PC-3 (cell line): ENCODE measurements at regions of chr7 and their contacts with region 1.

Region 1: DNA sequence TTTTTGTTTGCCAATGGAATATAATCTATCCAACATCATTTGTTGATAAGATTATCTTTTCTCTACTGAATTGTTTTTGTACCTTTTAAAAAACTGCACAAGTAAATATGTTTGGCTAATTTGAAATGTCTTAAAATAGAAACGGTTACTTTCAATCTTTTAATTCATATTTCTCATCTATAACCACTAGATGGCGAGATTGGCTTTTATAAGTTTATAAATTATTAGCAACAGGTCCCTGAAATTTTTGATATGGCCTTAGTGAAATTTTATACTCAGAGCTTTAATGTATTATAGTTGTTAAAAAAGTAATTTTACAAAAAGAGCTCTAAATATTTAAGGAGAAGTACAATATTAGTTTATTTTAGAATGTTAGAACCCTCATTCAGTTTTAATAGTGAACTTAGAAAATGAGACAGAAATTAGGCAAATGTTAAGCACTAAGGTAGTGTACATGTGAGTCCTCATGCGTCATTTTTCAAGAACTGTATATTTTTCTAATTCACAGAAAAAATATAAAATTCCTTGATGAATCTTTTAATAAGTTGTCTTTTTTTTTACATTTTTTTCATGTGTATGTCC is 592.5 kb downstream of the ARL4A start:
- DNase-seq: peak; percentile 63
- ATAC-seq: no peak; the same call in 1 of the 2 replicates
- H3K4me3 ChIP-seq: no peak overlapping the region
- H3K27ac ChIP-seq: no peak overlapping the region
- H3K4me1 ChIP-seq: no peaks in the 10 kb centered on the region
- H3K27me3 ChIP-seq: no peaks in the 10 kb centered on the region
- CTCF ChIP-seq: peak; percentile 69

Region 2: GRCh38 chr7:13359656-13360055 is 79.7 kb after region 1 on chr7:
- CTCF ChIA-PET with region 1: no interaction called
- POLR2A ChIA-PET with region 1: no interaction called
- intact Hi-C with region 1: loop called (anchors 1 kb)
- DNase-seq: peak; percentile 4
- ATAC-seq: no peak
- H3K4me3 ChIP-seq: no peak overlapping the region
- H3K27ac ChIP-seq: no peak overlapping the region
- H3K4me1 ChIP-seq: no peaks in the 10 kb centered on the region
- H3K27me3 ChIP-seq: no peaks in the 10 kb centered on the region
- CTCF ChIP-seq: 0 out of 2 replicates have a peak, but pooled peaks have one; percentile 26

Region 3: GRCh38 chr7:13414661-13415105 is 134.7 kb after region 1 on chr7:
- CTCF ChIA-PET with region 1: no interaction called
- POLR2A ChIA-PET with region 1: no interaction called
- intact Hi-C with region 1: loop called (anchors 2 kb)
- DNase-seq: peak; percentile 92
- ATAC-seq: peak; percentile 97
- H3K4me3 ChIP-seq: peak overlapping the region; percentile 2; the same call in 1 of the 2 replicates
- H3K27ac ChIP-seq: 0 out of 2 replicates have a peak overlapping the region, but pooled peaks have one; percentile 4
- H3K4me1 ChIP-seq: peaks cover 17% of the 10 kb centered on the region
- H3K27me3 ChIP-seq: no peaks in the 10 kb centered on the region
- CTCF ChIP-seq: no peak

Region 4: GRCh38 chr7:13524076-13524475 is 244.1 kb after region 1 on chr7:
- CTCF ChIA-PET with region 1: no interaction called
- POLR2A ChIA-PET with region 1: no interaction called
- intact Hi-C with region 1: loop called (anchors 2 kb)
- DNase-seq: no peak
- ATAC-seq: peak; percentile 60; the same call in 1 of the 2 replicates
- H3K4me3 ChIP-seq: no peak overlapping the region
- H3K27ac ChIP-seq: no peak overlapping the region
- H3K4me1 ChIP-seq: peaks cover 4% of the 10 kb centered on the region; the same call in 1 of the 2 replicates
- H3K27me3 ChIP-seq: no peaks in the 10 kb centered on the region
- CTCF ChIP-seq: no peak

Region 5: GRCh38 chr7:13540429-13540828 is 260.5 kb after region 1 on chr7:
- CTCF ChIA-PET with region 1: no interaction called
- POLR2A ChIA-PET with region 1: no interaction called
- intact Hi-C with region 1: no loop called
- DNase-seq: peak; percentile 25
- ATAC-seq: peak; percentile 13; the same call in 1 of the 2 replicates
- H3K4me3 ChIP-seq: no peak overlapping the region
- H3K27ac ChIP-seq: no peak overlapping the region
- H3K4me1 ChIP-seq: peaks cover 17% of the 10 kb centered on the region
- H3K27me3 ChIP-seq: no peaks in the 10 kb centered on the region
- CTCF ChIP-seq: no peak

Region 6: GRCh38 chr7:13725591-13725990 is 445.6 kb after region 1 on chr7:
- CTCF ChIA-PET with region 1: no interaction called
- POLR2A ChIA-PET with region 1: interaction called, 3 read pairs
- intact Hi-C with region 1: loop called (anchors 1 kb)
- DNase-seq: no peak
- ATAC-seq: no peak
- H3K4me3 ChIP-seq: no peak overlapping the region
- H3K27ac ChIP-seq: peak overlapping the region; percentile 58
- H3K4me1 ChIP-seq: peaks cover 10% of the 10 kb centered on the region
- H3K27me3 ChIP-seq: no peaks in the 10 kb centered on the region
- CTCF ChIP-seq: 0 out of 2 replicates have a peak, but pooled peaks have one; percentile 11

Region 7: DNA sequence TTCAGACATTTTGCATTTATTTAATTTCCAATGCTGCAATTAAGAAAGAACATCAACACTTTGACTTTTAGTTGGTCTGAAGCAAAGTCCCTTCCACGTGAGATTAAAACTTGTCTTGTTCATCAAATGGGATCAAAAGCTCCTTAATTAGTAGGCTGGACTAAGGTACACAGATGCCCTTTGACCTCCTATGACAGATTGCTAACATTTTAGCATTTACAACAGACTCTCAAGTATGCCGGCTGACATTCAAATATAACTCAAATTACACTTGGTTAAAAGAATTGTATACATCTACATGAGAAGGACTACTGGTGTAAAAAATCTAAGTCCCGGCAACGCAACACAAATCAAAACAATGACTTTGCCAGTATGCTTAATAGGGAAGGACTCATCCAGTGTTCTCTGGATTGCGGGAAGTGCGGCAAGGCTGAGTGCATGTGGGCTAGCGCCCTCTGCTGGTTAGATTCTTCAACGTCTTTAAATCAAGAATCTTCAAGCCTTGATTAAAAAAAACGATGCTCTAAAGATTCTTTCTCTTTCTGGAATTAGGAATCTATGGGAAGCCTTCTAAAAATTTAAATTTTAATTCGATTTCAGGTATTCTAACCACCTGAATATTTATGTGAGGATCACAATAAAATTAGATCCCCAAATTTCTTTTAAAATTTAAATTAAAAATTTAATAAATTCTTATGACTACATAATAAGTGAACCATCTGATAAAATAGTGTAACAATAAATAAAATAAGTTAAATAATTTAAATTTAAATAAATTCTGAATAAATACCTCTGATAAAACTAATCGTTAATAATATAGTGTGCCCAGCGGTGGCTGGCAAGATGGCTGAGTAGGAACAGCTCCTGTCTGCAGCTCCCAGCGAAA is 1177.9 kb after region 1 on chr7:
- CTCF ChIA-PET with region 1: no interaction called
- POLR2A ChIA-PET with region 1: no interaction called
- intact Hi-C with region 1: loop called (anchors 1 kb)
- DNase-seq: peak; percentile 84
- ATAC-seq: peak; percentile 92
- H3K4me3 ChIP-seq: peak overlapping the region; percentile 60
- H3K27ac ChIP-seq: no peak overlapping the region
- H3K4me1 ChIP-seq: 0 out of 2 replicates have a peak, but pooled peaks cover 4% of the 10 kb centered on the region
- H3K27me3 ChIP-seq: no peaks in the 10 kb centered on the region
- CTCF ChIP-seq: peak; percentile 85

Region 8: DNA sequence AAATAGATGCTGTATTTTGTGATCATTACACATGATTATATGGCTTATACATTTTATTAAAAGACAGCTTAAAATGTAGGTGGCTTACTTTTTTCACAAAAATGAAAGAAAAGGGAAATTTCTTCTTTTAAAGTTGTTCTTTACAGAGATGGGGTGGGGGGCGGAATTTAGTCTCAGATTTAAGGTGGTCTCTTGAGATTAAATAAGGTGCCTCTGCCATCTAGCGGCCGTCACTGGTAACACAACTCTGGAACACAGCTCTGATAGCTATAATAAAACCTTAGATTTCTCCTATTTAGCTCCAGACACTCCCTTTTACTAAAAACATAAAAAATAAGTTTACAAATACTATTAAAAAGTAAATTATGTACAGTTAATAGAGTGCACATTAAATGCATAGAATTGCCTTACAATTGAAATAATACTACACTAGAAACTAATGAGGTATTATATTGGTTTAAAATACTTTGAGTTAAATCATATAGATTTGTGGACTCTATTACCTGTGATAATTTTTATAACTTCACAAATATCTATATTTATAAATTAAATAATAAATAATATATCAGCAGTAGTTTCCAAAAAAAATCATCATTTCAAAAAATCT is 1411.8 kb after region 1 on chr7:
- CTCF ChIA-PET with region 1: interaction called, 8 read pairs
- POLR2A ChIA-PET with region 1: no interaction called
- intact Hi-C with region 1: loop called (anchors 1 kb)
- DNase-seq: peak; percentile 57
- ATAC-seq: peak; percentile 29; the same call in 1 of the 2 replicates
- H3K4me3 ChIP-seq: no peak overlapping the region
- H3K27ac ChIP-seq: no peak overlapping the region
- H3K4me1 ChIP-seq: no peaks in the 10 kb centered on the region
- H3K27me3 ChIP-seq: no peaks in the 10 kb centered on the region
- CTCF ChIP-seq: peak; percentile 93